ENCODE measurements at regions of chr15 and their contacts with region 1.

Region 1: DNA sequence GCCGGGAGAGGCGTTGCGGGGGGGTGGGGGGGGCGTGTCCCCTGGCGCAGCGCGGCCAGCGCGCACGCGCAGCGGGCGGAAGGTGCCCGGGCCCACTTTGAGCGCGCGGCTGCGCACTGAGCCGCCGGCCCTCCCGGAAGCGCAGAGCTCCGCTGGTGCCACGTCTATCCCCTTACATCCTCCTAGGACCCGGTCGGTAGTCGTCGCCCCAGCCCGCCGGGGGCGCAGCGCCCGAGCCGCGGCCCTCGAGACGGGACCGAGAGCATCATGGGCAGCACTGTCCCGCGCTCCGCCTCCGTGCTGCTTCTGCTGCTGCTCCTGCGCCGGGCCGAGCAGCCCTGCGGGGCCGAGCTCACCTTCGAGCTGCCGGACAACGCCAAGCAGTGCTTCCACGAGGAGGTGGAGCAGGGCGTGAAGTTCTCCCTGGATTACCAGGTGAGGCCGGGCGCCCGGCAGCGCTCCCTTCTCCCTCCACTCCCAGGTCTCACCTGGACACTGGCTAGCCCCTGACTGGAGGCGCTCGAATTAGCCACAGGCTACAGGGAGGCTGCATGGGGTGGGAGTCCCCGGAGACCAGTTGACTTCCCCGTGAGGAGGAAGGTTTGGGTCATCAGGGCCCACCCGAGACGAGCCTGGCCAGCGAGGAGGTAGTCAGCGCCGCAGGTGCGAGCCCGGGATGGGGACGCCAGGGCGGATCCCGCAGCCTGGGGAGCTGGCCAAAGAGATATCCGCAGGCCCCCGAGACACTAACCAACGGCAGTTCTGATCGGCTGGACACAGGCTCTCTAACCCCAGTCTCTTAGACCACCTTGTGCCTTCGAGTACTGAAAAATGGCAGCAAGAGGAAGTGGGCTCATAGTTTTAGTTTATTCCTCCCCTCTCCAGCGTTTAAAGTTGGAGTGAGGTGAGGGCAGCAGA is at the start of gene TMED3:
- DNase-seq: peak; percentile 49 to 87 (median 75)
- ATAC-seq: peak; percentile 71 to 95 (median 92)
- H3K4me3 ChIP-seq: peak within 1 kb of the TSS; percentile 57 to 98 (median 76)
- H3K27ac ChIP-seq: peak within 1 kb of the TSS in 3 of 12 donors; percentile 11 to 51 (median 48)
- H3K4me1 ChIP-seq: peaks cover 0 to 17% (median 10%) of the 10 kb centered on the region in 12 donors
- H3K27me3 ChIP-seq: peaks cover 0 to 5% (median 0%) of the 10 kb centered on the region in 9 donors
- CTCF ChIP-seq: peak in 3 of 12 donors; percentile 7 to 38 (median 20)
- POLR2A ChIP-seq: no peak
- total RNA-seq, gene TMED3: 18.0 to 48.2 (median 24.6) TPM

Region 2: DNA sequence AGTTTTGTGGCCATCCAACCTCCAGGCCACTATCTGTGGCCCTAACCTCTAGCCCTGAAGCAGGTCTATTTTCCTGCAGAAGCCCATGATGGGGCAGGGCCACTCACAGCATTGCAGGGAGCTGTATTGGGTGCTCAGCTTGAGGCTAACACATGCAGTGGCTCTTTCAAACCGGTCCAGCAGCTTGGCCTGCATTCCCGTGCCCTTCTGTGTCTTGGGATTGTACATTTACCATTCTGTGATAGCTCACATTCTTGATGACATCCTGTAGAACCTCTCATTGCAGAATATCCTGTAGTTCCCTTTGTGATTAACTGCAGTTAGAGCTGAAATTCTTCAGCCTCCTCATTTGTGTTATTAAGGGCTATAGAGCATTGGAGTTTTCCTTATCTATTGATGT is 89.6 kb before region 1 on chr15:
- intact Hi-C with region 1: loop called in 1 of 10 experiments (anchors 5 kb)
- DNase-seq: no peak
- ATAC-seq: no peak
- H3K4me3 ChIP-seq: no peak overlapping the region
- H3K27ac ChIP-seq: no peak overlapping the region
- H3K4me1 ChIP-seq: peaks cover 0 to 32% (median 4%) of the 10 kb centered on the region in 12 donors
- H3K27me3 ChIP-seq: peaks cover 0 to 6% (median 0%) of the 10 kb centered on the region in 9 donors
- CTCF ChIP-seq: no peak
- POLR2A ChIP-seq: no peak